ENCODE measurements at regions of chr12 and their contacts with region 1.

Region 1: DNA sequence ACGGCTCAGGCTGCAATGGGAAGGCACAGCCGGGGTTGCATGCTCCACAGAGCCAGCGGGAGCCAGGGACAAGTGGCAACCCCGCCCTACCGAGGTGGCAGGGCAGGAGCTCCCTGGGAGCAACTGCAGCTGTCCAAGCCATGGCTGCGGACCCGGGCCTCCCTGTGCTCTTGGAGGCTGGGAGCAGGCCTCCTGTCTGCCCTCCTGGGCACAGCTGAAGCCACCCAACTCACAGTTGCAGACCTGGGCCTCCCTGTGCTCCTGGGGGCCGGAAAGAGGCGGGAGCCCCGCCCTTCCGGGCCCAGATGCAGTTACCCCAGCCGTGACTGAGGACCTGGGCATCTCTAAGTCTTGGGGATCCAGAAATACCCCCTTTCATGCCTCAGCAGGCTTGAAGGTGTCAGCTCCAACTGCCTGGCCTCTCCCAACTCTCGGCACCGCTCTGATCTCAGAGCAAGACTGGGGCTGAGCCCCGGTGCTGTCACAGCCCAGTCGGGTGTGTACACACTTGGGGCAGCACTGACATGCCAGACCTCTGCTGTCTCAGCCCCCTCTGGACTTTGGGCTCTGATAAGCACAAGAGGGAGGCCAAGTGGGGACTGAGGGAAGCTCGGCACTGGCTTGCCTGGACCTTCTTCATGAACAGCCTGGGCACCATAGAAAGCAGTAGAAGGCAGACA is 7.5 kb upstream of the RASSF9 start:
- DNase-seq: no peak
- H3K4me3 ChIP-seq: no peak overlapping the region
- H3K27ac ChIP-seq: no peak overlapping the region
- H3K4me1 ChIP-seq: no peaks in the 10 kb centered on the region
- H3K27me3 ChIP-seq: no peaks in the 10 kb centered on the region
- CTCF ChIP-seq: no peak

Region 2: GRCh38 chr12:85559536-85559935 is 284.2 kb before region 1 on chr12:
- CTCF ChIA-PET with region 1: interaction called, 14 read pairs
- dilution Hi-C with region 1: no loop called
- in situ Hi-C with region 1: no loop called
- intact Hi-C with region 1: no loop called
- DNase-seq: no peak
- H3K4me3 ChIP-seq: no peak overlapping the region
- H3K27ac ChIP-seq: no peak overlapping the region
- H3K4me1 ChIP-seq: no peaks in the 10 kb centered on the region
- H3K27me3 ChIP-seq: no peaks in the 10 kb centered on the region
- CTCF ChIP-seq: no peak